Activated T-helper 1 cell treated with anti-CD3 and anti-CD28 coated beads, Interleukin-12 subunit alpha, Interleukin-12 subunit beta, Interleukin-2, Interleukin-4 antibody, amounts not matched to agents 30 ng/mL and 10 ng/mL and 1 ng/mL, durations not matched to agents 14 hours and 24 hours and 36 hours (primary cell): ENCODE measurements at regions of chr12 and their contacts with region 1.

Region 1: DNA sequence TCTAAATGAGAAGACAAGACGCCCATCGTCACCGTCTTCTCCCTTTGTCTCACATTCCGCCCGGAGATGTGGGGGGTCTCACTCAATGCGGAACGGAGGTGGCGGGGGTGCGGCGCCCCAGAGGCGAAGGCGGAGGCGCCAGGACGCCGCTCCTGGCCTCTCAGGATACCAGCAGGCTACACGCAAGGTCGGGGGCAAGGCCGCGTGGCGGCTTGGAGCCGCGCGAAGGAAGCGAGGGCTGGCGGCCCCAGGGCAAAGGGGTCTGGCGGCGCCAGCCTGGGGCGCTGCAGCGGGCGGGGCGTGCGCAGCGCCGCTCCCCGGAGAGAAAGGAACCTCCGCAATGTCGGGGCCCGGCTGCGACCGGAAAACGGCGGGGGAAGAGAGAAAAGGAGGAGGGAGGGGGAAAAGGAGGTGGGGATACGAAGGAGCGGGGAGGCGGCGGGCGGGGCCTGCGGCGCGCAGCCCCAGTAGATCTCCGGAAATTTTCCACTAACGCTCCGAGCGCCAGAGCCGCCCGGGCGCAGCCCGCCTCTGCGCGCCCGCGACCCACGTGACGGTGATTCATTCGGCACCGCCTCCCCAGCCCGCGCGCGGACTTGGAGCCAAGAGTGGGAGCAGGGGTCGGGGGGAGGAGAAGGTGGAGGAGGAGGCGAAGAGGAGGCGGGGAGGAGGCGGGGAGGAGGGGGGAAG is 10.5 kb upstream of the SLC38A2 start:
- DNase-seq: peak; percentile 95
- H3K4me3 Mint-ChIP-seq: peak overlapping the region; percentile 84
- H3K27ac Mint-ChIP-seq: peak overlapping the region; percentile 92
- H3K4me1 Mint-ChIP-seq: peaks cover 54% of the 10 kb centered on the region
- H3K27me3 Mint-ChIP-seq: no peaks in the 10 kb centered on the region

Region 2: DNA sequence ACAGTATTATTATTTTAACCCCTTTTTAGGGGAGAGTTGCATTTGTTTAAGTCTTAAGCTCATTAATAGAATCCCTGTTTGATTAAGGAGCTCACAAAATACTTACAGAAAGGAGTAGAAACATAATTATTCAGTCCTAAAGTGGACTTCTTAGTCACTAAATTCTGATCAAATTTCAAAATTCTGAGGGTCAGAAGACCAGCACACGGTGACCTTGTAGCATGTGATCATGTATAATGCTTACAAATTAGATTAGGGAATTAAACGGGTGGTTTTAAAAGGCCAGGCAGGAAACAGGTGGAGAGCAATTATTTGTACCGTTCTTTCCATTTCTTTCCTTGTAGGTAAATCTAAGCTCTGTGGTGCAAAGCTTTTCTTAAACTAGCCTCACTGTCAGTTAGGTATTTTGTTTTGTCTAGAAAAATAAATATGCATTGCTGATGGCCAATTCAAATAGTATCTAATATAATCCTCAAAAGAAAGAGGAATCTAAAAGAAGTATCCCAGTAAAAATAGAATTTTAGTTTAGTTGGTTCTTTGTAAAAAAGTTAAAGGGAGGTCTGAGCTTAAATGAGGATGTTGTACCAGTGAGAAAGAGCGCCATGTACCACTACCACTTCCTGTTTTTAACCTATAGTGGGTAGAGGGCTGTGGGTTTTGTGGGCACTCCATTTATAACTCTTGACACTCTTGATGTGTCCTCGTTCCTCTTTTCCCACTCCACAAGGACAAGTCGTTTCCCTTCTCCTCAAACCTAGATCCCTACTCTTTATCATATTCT is 165.4 kb before region 1 on chr12:
- intact Hi-C with region 1: loop called (anchors 1 kb)
- DNase-seq: peak; percentile 64
- H3K4me3 Mint-ChIP-seq: peak overlapping the region; percentile 68
- H3K27ac Mint-ChIP-seq: peak overlapping the region; percentile 92
- H3K4me1 Mint-ChIP-seq: peaks cover 97% of the 10 kb centered on the region
- H3K27me3 Mint-ChIP-seq: no peaks in the 10 kb centered on the region

Region 3: GRCh38 chr12:46430340-46430948 is 47.3 kb after region 1 on chr12:
- intact Hi-C with region 1: loop called (anchors 1 kb)
- DNase-seq: peak; percentile 6
- H3K4me3 Mint-ChIP-seq: peak overlapping the region; percentile 69
- H3K27ac Mint-ChIP-seq: peak overlapping the region; percentile 72
- H3K4me1 Mint-ChIP-seq: peaks cover 38% of the 10 kb centered on the region
- H3K27me3 Mint-ChIP-seq: no peaks in the 10 kb centered on the region

Region 4: DNA sequence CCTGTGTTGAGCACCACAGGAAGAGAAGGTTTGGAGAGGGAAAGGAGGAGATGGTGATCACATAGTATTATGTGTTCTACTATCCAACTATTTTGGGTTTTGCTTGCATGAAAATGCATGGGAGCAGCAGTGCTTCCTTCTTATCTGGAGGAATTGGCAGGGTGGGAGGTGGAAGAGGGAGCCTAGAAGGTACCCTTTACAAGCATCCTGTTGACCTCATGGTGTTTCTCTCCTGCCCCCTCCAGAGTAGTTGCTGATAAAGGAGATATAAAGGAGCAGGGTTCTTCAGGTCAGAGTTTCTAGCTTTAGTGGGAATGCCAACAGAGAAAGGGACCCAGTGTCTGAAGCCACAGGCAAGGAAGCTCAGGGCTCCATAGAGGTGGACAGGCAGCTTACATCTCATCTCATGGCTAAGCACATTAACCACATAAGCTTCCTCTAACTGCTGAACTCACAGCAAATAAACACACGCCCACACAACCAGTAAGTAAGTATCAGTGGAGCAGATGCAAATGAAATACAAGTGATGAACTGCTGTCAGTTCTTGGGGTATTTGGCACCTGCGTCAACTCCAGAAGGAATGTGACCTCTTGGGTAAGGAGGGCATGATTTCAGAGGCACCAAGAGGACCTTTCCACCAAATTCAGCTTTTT is 163.7 kb after region 1 on chr12:
- intact Hi-C with region 1: loop called (anchors 1 kb)
- DNase-seq: peak; percentile 19
- H3K4me3 Mint-ChIP-seq: peak overlapping the region; percentile 34
- H3K27ac Mint-ChIP-seq: peak overlapping the region; percentile 89
- H3K4me1 Mint-ChIP-seq: peaks cover 58% of the 10 kb centered on the region
- H3K27me3 Mint-ChIP-seq: no peaks in the 10 kb centered on the region

Region 5: DNA sequence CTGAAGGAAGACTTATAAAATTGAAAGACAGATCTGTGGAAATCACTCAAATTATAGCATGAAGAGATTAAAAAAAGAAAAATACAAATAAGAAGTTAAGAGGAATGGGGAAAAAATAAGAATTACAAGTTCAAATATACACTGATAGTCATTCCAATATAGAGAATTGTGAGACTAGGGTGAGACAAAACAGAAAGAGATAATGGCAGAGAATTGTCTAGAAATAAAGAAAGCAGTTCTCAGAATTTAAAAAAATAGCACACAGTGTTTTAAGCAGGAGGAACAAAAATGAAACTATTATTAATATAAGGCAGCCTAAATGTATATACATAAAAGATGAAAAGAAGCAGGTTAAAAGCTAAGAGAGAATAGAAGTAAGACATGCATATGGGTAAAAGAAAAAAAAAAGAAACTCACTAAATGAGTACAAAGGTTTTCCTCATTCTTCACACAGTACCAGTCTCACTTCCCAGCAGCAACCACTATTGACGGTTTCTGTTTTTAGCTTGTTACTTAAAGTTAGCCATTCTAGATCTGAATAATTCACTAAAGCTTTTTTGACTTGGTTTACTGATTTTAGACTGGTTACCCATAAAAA is 411.6 kb after region 1 on chr12:
- intact Hi-C with region 1: loop called (anchors 10 kb)
- DNase-seq: no peak
- H3K4me3 Mint-ChIP-seq: no peak overlapping the region
- H3K27ac Mint-ChIP-seq: peak overlapping the region; percentile 64
- H3K4me1 Mint-ChIP-seq: peaks cover 19% of the 10 kb centered on the region
- H3K27me3 Mint-ChIP-seq: peaks cover 2% of the 10 kb centered on the region